ENCODE measurements at regions of chr9 and their contacts with region 1.

Region 1: DNA sequence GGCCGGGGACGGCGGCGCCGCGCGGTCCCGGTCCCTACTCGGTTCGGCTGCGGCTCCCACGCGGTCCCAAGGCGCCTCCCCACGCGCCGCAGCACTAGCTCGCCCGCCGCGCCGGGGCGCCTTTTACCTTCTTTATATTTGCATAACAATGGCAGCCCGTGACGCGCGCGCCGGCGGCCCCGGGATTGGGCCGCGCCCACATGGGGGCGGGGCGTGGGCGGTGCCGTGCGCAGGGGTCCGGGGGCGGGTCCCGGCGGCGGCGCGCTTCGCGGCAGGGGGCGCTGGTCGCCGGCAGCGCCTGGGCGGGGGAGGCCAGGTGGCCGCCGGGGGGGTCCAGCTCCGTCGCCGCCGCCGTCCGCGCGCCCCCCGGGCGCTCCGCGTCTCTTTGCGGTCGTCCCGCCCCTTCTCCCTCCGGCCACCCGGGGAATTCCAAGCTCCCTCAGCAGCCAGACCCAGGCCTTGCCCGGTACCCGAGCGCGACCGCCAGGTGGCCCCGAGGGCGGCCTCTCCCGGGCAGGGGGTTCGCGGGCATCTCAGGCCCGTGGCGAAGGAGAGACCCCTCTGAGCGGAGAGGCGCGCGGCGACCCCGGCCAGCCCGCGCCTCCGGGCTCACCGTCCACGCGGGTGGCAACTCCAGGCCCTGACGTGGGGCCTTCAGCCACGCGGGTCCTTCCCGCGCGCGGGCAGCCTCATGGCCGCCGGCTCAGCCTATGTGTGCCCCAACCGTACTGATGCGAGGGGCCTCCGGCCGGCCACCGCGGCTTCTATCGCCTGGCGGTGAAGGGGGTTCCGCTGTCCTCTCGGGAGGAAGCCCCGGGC is at the start of gene NRARP:
- DNase-seq: peak; percentile 82 to 93 (median 90)
- H3K4me3 ChIP-seq: peak within 1 kb of the TSS; percentile 37
- H3K27ac ChIP-seq: peak within 1 kb of the TSS in 1 of 2 donors; percentile 25
- H3K4me1 ChIP-seq: peaks cover 17% of the 10 kb centered on the region
- H3K27me3 ChIP-seq: peaks cover 11% of the 10 kb centered on the region
- CTCF ChIP-seq: peak in 1 of 3 donors; percentile 55
- EP300 ChIP-seq: no peak
- POLR2A ChIP-seq: no peak
- total RNA-seq, gene NRARP: 1.3 to 13.8 (median 4.6) TPM

Region 2: DNA sequence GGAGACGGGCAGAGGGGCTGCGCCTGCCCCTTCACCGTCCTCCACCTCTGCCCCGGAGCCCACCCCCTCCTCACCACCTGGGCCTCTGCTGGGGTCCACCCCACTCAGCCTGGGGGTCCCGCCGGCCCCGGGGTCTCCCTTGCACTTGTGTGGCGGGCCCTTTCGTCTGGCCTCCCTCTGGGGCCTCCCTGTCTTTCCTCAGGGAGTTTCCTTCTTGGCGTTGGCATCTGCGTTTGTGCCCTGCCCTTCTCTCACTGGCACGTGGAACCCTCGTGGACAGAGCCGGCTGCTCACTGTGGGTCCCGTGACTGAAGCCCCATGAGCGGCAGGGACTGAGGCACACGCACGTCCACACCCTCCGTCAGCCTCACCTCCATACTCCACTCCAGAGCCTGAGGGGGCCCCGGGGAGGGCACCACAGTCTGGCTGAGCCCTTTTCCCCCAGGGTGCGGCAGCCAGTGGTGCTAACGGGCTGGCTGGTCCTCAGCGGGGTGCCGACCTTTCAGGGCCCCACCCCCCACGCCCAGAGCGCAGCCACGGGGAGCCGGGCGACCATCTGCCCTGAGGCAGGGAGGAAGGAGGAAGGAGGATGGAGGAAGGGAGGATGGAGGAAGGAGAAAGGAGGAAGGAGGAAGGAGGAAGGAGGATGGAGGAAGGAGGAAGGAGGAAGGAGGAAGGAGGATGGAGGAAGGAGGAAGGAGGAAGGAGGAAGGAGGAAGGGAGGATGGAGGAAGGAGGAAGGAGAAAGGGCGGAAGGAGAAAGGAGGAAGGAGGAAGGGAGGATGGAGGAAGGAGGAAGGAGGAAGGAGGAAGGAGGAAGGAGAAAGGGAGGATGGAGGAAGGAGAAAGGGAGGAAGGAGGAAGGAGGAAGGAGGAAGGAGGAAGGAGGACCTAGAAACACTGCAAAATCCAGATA is 52.7 kb after region 1 on chr9:
- intact Hi-C with region 1: no loop called
- DNase-seq: no peak
- H3K4me3 ChIP-seq: no peak overlapping the region
- H3K27ac ChIP-seq: no peak overlapping the region
- H3K4me1 ChIP-seq: no peaks in the 10 kb centered on the region
- H3K27me3 ChIP-seq: no peaks in the 10 kb centered on the region
- CTCF ChIP-seq: no peak
- EP300 ChIP-seq: no peak
- POLR2A ChIP-seq: no peak

Region 3: GRCh38 chr9:137406876-137407589 is 104.6 kb after region 1 on chr9:
- intact Hi-C with region 1: loop called in 3 of 4 experiments (anchors 5 kb)
- DNase-seq: peak; percentile 58 to 83 (median 74)
- H3K4me3 ChIP-seq: peak overlapping the region; percentile 33
- H3K27ac ChIP-seq: peak overlapping the region; percentile 56 to 66
- H3K4me1 ChIP-seq: peaks cover 14% of the 10 kb centered on the region
- H3K27me3 ChIP-seq: no peaks in the 10 kb centered on the region
- CTCF ChIP-seq: peak; percentile 35 to 87 (median 71)
- EP300 ChIP-seq: no peak
- POLR2A ChIP-seq: no peak

Region 4: GRCh38 chr9:137445275-137445807 is 143.0 kb after region 1 on chr9:
- intact Hi-C with region 1: loop called in 2 of 4 experiments (anchors 5 to 10 kb)
- DNase-seq: peak; percentile 66 to 85 (median 83)
- H3K4me3 ChIP-seq: no peak overlapping the region
- H3K27ac ChIP-seq: no peak overlapping the region
- H3K4me1 ChIP-seq: no peaks in the 10 kb centered on the region
- H3K27me3 ChIP-seq: no peaks in the 10 kb centered on the region
- CTCF ChIP-seq: peak; percentile 43 to 68 (median 54)
- EP300 ChIP-seq: no peak
- POLR2A ChIP-seq: no peak

Measured in ovary (tissue), 10 donors.